ENCODE measurements at regions of chr18 and their contacts with region 1.

Region 1: GRCh38 chr18:42864876-42865275 is 250.6 kb downstream of the RIT2 start:
- DNase-seq: no peak
- H3K4me3 ChIP-seq: no peak overlapping the region
- H3K27ac ChIP-seq: no peak overlapping the region
- H3K4me1 ChIP-seq: no peaks in the 10 kb centered on the region
- H3K27me3 ChIP-seq: no peaks in the 10 kb centered on the region
- CTCF ChIP-seq: no peak
- EP300 ChIP-seq: no peak
- POLR2A ChIP-seq: no peak

Region 2: DNA sequence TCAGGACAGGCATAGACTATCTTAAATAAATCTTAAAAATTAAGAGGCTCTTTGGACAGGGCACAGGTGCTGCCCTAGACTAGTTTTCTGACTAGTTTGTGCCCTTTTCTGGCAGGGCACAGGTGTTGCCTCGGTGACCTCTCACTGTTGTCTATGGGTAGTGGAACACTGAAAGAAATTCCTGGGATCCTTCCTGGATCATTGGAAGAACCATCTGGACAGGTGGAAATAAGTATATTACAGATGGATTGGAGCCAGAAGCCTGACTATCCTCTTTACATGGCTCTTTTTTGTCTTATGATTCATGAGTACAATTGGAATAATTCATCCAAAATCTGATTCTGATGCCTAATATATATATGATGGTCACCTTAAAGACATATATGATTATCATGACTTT is 36.0 kb before region 1 on chr18:
- intact Hi-C with region 1: loop called in 1 of 4 experiments (anchors 2 kb)
- DNase-seq: no peak
- H3K4me3 ChIP-seq: no peak overlapping the region
- H3K27ac ChIP-seq: no peak overlapping the region
- H3K4me1 ChIP-seq: no peaks in the 10 kb centered on the region
- H3K27me3 ChIP-seq: no peaks in the 10 kb centered on the region
- CTCF ChIP-seq: no peak
- EP300 ChIP-seq: no peak
- POLR2A ChIP-seq: no peak

Region 3: GRCh38 chr18:43148231-43148630 is 283.4 kb after region 1 on chr18:
- intact Hi-C with region 1: no loop called
- DNase-seq: no peak
- H3K4me3 ChIP-seq: no peak overlapping the region
- H3K27ac ChIP-seq: no peak overlapping the region
- H3K4me1 ChIP-seq: no peaks in the 10 kb centered on the region
- H3K27me3 ChIP-seq: no peaks in the 10 kb centered on the region
- CTCF ChIP-seq: no peak
- EP300 ChIP-seq: no peak
- POLR2A ChIP-seq: no peak